ENCODE measurements at regions of chr14 and their contacts with region 1.

Region 1: DNA sequence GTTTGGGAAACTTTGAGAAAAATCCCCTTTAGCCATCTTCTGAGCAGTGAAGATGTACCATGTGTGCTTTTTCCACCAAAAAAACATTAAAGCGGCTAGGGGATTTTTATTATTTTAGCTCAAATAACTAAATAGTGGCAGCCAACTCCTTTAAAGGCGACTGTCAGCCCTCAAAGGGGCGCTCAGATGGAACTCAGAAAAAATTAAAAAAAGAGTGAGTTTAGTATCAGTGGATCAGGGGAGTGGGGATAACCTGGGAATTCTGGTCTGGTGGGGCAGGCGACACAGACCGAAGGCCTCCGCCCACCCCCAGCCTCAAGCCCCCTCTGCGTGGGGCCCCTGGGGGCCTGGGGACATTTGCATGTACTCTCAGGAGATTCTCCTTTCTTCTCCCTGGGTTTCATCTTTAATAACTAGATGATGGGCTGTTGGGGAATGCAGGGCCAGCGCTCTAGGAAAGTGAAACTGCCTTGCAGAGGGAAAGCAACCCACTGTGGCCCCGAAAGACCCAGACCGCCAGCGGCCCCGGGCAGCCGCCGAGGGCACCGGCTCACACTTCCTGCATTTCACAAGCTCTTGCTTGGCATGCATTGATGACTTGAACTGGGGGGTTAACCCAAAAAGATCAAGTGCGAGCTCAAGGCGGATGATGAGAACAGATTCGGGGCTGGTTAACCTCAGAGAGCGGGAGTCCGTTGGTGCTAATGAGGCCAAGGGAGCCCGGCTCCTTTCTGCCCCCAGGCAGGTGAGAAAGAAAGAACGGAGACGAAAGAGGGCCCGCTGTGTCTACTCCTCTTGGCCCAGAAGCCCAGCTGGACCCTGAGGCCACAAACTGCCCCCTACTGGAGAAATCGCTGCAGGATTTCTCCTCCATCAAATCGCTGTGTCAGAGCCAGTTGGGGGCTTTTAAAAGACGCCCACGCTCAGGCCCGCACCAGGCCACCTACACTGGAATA is 7.3 kb upstream of the BATF start:
- DNase-seq: peak; percentile 81
- ATAC-seq: peak; percentile 76
- H3K4me3 Mint-ChIP-seq: peak overlapping the region; percentile 79
- H3K27ac Mint-ChIP-seq: peak overlapping the region; percentile 99
- H3K4me1 Mint-ChIP-seq: peaks cover 52% of the 10 kb centered on the region
- H3K27me3 Mint-ChIP-seq: no peaks in the 10 kb centered on the region

Region 2: DNA sequence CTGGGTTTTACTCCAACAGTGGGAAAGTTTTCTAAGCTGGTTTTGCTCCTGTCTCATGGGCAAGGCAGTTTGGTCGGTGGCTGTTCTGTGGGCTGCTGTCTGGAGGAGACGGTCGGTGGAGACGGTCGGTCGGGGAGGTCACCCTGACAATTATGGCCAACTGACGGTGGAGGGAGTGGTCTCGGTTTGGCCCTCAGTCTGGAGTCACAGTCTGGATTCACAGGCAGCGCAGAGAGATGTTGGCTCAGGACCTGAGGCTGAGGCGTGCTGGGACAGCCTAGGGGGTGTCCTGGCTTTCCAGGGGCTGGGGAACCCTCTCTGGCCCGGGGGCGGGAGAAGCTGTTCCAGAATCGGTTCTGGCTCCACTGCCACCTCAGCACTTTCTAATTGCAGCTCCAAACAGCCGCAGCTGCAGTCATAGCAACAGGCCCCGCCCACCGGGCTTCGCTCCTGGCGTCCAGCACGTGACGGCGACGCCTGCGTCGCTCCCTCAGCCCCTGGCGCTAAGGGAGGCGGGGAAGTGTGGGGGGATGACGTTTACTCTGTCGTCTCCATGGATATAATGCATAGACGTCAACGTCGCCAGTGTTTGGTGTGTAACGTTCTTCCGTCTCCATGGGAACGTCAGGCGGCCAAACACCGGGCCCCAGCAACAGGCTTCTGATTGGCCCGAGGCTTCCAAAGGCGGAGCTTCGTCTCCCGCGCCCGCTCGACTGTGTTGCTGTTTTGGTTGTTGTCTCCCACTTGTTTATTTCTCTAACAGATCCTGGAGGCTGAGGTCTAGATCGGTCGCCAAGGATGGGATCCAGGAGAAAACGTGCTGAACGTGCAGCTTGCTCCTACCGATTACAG is 256.1 kb before region 1 on chr14:
- CTCF ChIA-PET with region 1: no interaction called
- DNase-seq: peak; percentile 99
- ATAC-seq: peak; percentile 91
- H3K4me3 Mint-ChIP-seq: peak overlapping the region; percentile 81
- H3K27ac Mint-ChIP-seq: peak overlapping the region; percentile 95
- H3K4me1 Mint-ChIP-seq: peaks cover 18% of the 10 kb centered on the region
- H3K27me3 Mint-ChIP-seq: peaks cover 54% of the 10 kb centered on the region

Region 3: DNA sequence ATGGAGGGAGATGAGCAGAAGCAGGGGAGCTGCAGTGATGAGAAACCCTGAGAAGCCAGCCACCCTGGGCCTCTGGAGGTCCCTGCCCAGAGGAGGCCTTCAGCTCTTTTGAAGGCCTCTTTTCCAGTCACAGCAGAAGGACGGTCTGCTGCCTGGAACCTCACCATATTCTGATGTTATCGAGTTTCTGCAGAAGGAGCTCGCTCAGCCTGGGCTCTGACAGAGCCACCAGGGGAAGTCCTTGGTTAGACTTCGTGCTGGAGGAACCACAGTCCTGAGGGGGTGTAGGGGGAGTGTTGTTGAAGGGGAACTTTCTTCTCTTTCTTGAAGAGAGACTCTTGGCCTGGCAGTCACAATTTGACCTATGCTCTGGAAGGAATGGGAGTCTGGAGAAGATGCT is 17.8 kb before region 1 on chr14:
- CTCF ChIA-PET with region 1: interaction called, 141 read pairs
- DNase-seq: peak; percentile 84
- ATAC-seq: peak; percentile 73
- H3K4me3 Mint-ChIP-seq: peak overlapping the region; percentile 63
- H3K27ac Mint-ChIP-seq: peak overlapping the region; percentile 93
- H3K4me1 Mint-ChIP-seq: peaks cover 74% of the 10 kb centered on the region
- H3K27me3 Mint-ChIP-seq: no peaks in the 10 kb centered on the region

Region 4: DNA sequence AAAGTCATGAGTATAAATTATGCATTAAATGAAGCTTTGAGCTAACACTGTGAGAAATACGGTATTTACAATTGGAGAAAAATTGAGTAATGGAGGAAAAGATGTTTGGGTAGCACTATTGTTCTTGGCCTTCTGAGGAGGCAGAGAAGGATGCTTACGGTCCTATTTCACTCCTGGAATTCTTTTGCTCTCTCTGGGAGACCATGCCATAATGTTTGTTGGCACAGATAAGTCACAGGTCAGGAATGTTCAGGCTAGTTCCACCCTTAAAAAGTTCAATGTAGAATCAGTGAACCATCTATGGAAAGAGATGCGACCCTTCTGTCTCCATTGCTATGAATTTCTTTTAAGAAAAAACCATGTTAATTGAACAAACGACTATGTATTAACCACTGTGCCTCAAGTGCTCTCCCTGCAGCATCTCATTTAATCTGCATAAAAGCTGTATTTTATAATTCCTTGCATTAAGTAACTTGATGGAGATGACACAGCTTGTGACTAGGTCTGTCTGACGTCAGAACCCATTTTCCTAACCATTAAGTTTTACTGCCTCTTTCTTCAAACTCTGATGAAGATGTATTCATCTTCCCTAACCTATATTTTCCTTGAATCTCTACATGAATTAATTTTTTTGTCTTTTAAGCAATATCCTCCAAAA is 16.8 kb after region 1 on chr14:
- CTCF ChIA-PET with region 1: interaction called, 143 read pairs
- DNase-seq: peak; percentile 7
- ATAC-seq: no peak
- H3K4me3 Mint-ChIP-seq: no peak overlapping the region
- H3K27ac Mint-ChIP-seq: peak overlapping the region; percentile 44
- H3K4me1 Mint-ChIP-seq: peaks cover 75% of the 10 kb centered on the region
- H3K27me3 Mint-ChIP-seq: no peaks in the 10 kb centered on the region

Region 5: DNA sequence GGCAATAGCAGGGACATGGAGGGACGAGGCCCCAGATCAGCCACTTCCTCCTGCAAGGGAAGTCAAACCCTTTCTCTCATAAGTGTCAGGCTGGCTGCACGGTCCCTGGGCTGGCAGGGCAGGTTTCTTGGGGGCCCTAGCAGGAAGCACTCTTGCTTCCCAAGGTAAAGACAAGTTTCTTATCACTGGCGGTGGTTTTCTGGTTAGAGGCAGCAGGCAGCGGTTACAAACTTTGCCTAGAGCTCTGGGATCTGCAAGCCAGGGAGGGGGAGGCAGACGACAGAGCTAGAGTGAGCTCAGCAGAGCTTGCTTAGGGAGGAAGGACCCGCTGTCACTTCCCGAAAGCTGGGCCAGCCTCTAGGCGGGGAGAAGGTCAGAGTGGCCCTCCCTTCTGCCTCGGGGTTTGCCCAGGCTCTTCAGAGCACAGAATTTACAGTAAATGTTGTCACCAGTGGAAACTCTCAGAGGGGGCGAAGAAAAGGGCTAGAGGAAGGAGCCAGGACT is 27.7 kb after region 1 on chr14:
- CTCF ChIA-PET with region 1: interaction called, 143 read pairs
- DNase-seq: peak; percentile 90
- ATAC-seq: peak; percentile 85
- H3K4me3 Mint-ChIP-seq: peak overlapping the region; percentile 68
- H3K27ac Mint-ChIP-seq: peak overlapping the region; percentile 99
- H3K4me1 Mint-ChIP-seq: peaks cover 74% of the 10 kb centered on the region
- H3K27me3 Mint-ChIP-seq: no peaks in the 10 kb centered on the region

Region 6: GRCh38 chr14:75549169-75549568 is 34.2 kb after region 1 on chr14:
- CTCF ChIA-PET with region 1: interaction called, 143 read pairs
- DNase-seq: no peak
- ATAC-seq: peak; percentile 38
- H3K4me3 Mint-ChIP-seq: no peak overlapping the region
- H3K27ac Mint-ChIP-seq: peak overlapping the region; percentile 29
- H3K4me1 Mint-ChIP-seq: peaks cover 72% of the 10 kb centered on the region
- H3K27me3 Mint-ChIP-seq: no peaks in the 10 kb centered on the region

Region 7: DNA sequence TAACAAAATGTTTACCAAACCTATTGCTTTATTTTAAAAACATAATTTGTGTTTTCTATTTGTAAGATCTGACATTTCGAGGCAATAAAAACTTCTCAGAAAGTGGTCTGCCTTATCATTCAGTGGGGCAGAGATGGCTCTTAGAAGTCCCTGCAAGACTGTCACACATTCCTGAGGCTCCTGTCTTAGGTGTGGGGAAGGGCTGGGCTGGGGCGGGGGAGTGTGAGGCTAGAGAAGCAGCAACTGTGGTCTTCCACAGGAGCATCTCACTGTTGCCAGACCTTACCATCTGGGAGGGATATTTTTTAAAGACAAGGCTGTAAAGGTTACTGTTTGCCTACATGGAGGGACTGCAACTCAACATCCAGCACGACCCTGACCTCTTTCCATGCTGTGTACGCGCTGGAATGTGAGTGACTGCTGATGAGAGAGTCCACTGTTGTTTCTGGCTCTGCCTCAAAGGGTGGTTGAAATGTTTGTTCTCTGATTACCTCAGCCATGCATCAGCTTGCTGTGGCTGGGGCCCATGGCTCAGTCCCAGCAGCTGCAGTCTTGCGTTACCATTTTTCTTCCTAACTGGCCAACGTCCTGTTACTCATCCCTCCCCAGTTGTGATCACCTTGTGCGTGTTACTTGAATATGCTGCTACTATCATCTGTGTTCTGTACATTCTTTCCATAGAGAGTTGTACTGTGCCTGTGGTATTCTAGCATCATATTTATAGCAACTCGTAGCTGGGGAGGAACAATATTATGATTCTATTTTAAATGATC is 133.3 kb after region 1 on chr14:
- CTCF ChIA-PET with region 1: no interaction called
- DNase-seq: no peak
- ATAC-seq: no peak
- H3K4me3 Mint-ChIP-seq: no peak overlapping the region
- H3K27ac Mint-ChIP-seq: no peak overlapping the region
- H3K4me1 Mint-ChIP-seq: no peaks in the 10 kb centered on the region
- H3K27me3 Mint-ChIP-seq: no peaks in the 10 kb centered on the region

Measured in activated CD8-positive, alpha-beta memory T cell treated with anti-CD3 and anti-CD28 coated beads, Interleukin-2, amount 10 ng/mL, durations not matched to agents 7 days and 5 days (primary cell).